B cell (primary cell): ENCODE measurements at regions of chr19 and their contacts with region 1.

Region 1: GRCh38 chr19:4791170-4792018 is at the start of gene FEM1A:
- DNase-seq: peak; percentile 100
- ATAC-seq: peak; percentile 94
- H3K4me3 ChIP-seq: peak within 1 kb of the TSS; percentile 48 to 79 (median 76)
- H3K4me3 Mint-ChIP-seq: peak within 1 kb of the TSS; percentile 84
- H3K27ac ChIP-seq: peak within 1 kb of the TSS; percentile 67 to 93
- H3K27ac Mint-ChIP-seq: peak within 1 kb of the TSS; percentile 89
- H3K4me1 ChIP-seq: peaks cover 8 to 22% of the 10 kb centered on the region in 2 donors
- H3K4me1 Mint-ChIP-seq: peaks cover 30% of the 10 kb centered on the region
- H3K27me3 ChIP-seq: no peaks in the 10 kb centered on the region
- H3K27me3 Mint-ChIP-seq: no peaks in the 10 kb centered on the region
- CTCF ChIP-seq: peak; percentile 98
- total RNA-seq, gene FEM1A: 18.2 and 18.7 TPM in 2 replicates

Region 2: GRCh38 chr19:3185482-3186376 is 1605.7 kb before region 1 on chr19 and contains the start of gene NCLN:
- CTCF ChIA-PET with region 1: no interaction called
- POLR2A ChIA-PET with region 1: no interaction called
- intact Hi-C with region 1: loop called (anchors 10 kb)
- DNase-seq: peak; percentile 98
- ATAC-seq: peak; percentile 88
- H3K4me3 ChIP-seq: peak within 1 kb of the TSS; percentile 61 to 88 (median 79)
- H3K4me3 Mint-ChIP-seq: peak within 1 kb of the TSS; percentile 93
- H3K27ac ChIP-seq: peak within 1 kb of the TSS; percentile 62 to 77
- H3K27ac Mint-ChIP-seq: peak within 1 kb of the TSS; percentile 94
- H3K4me1 ChIP-seq: peaks cover 51 to 83% of the 10 kb centered on the region in 2 donors
- H3K4me1 Mint-ChIP-seq: peaks cover 66% of the 10 kb centered on the region
- H3K27me3 ChIP-seq: no peaks in the 10 kb centered on the region
- H3K27me3 Mint-ChIP-seq: no peaks in the 10 kb centered on the region
- CTCF ChIP-seq: no peak
- total RNA-seq, gene NCLN: 53.6 and 55.0 TPM in 2 replicates

Region 3: DNA sequence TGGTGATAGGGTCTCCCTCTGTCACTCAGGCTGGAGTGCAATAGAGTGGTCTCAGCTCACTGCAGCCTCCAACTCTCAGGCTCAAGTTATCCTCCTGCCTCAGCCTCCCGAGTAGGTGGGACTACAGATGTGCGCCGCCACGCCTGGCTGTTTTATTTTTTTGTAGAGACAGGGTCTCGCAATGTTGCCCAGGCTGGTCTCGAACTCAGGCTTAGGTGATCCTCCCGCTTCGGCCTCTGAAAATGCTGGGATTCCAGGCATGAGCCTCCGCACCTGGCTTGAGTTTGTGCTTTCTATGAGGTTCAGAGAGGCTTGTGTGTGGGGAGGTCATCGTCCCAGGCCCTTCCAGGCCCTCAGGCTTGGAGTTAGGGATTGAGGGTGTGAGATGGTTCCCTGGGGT is 191.3 kb before region 1 on chr19:
- CTCF ChIA-PET with region 1: no interaction called
- POLR2A ChIA-PET with region 1: no interaction called
- intact Hi-C with region 1: no loop called
- DNase-seq: no peak
- ATAC-seq: no peak
- H3K4me3 ChIP-seq: no peak overlapping the region
- H3K4me3 Mint-ChIP-seq: no peak overlapping the region
- H3K27ac ChIP-seq: no peak overlapping the region
- H3K27ac Mint-ChIP-seq: no peak overlapping the region
- H3K4me1 ChIP-seq: peaks cover 15% of the 10 kb centered on the region in 2 donors
- H3K4me1 Mint-ChIP-seq: peaks cover 12% of the 10 kb centered on the region
- H3K27me3 ChIP-seq: peaks cover 0 to 44% (median 20%) of the 10 kb centered on the region in 4 experiments
- H3K27me3 Mint-ChIP-seq: peaks cover 26% of the 10 kb centered on the region
- CTCF ChIP-seq: no peak

Region 4: GRCh38 chr19:4638828-4639530 is 152.4 kb before region 1 on chr19 and contains the start of gene TNFAIP8L1:
- CTCF ChIA-PET with region 1: interaction called, 4 read pairs
- POLR2A ChIA-PET with region 1: no interaction called
- intact Hi-C with region 1: loop called (anchors 1 kb)
- DNase-seq: peak; percentile 97
- ATAC-seq: peak; percentile 91
- H3K4me3 ChIP-seq: peak within 1 kb of the TSS; percentile 74 to 96 (median 93)
- H3K4me3 Mint-ChIP-seq: peak within 1 kb of the TSS; percentile 99
- H3K27ac ChIP-seq: peak within 1 kb of the TSS; percentile 86 to 88
- H3K27ac Mint-ChIP-seq: peak within 1 kb of the TSS; percentile 94
- H3K4me1 ChIP-seq: peaks cover 34 to 72% of the 10 kb centered on the region in 2 donors
- H3K4me1 Mint-ChIP-seq: peaks cover 40% of the 10 kb centered on the region
- H3K27me3 ChIP-seq: peaks cover 0 to 3% (median 0%) of the 10 kb centered on the region in 4 experiments
- H3K27me3 Mint-ChIP-seq: no peaks in the 10 kb centered on the region
- CTCF ChIP-seq: no peak
- total RNA-seq, gene TNFAIP8L1: 20.9 and 21.7 TPM in 2 replicates

Region 5: DNA sequence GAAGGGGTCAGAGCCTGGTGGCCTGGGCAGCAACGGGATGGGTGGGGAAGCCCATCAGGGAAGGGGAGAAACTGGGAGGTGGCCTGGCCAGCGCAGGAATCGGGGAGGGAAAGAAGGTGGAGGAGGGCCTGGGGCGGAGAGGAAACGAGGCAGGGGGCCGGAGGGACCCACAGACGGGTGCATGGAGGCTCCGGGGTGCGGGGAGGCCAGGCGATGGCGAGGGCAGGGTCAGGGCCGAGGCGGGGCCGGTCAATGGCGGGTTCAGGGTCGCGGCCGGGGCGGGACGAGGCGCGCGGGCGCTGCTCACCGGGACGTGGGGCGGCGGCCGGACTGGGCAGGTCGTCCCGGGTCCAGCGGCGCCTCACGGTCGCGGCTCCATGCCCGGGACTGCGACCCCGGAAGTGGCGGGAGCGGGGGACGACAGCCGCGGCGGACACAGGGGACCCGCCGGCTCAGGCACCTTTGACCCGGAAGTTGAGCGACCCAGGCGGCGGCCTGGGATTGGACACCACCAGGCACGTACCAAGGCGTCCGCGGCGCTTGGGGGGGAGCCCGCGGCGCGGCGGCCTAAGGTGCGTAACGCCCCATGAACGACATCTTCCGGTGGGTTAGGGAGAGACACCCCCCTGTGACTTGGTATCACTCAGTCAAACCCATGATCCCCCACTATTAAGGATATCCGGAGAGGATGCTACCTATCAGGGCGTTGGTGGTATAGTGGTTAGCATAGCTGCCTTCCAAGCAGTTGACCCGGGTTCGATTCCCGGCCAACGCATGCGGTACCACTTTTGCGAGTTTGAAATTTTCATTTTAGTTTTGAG is 67.8 kb before region 1 on chr19 and contains the start of gene DPP9:
- CTCF ChIA-PET with region 1: interaction called, 102 read pairs
- POLR2A ChIA-PET with region 1: interaction called, 23 read pairs
- intact Hi-C with region 1: loop called (anchors 1 kb)
- DNase-seq: peak; percentile 100
- ATAC-seq: peak; percentile 94
- H3K4me3 ChIP-seq: peak within 1 kb of the TSS; percentile 71 to 97 (median 91)
- H3K4me3 Mint-ChIP-seq: peak within 1 kb of the TSS; percentile 97
- H3K27ac ChIP-seq: peak within 1 kb of the TSS; percentile 63 to 89
- H3K27ac Mint-ChIP-seq: peak within 1 kb of the TSS; percentile 98
- H3K4me1 ChIP-seq: peaks cover 20 to 26% of the 10 kb centered on the region in 2 donors
- H3K4me1 Mint-ChIP-seq: peaks cover 45% of the 10 kb centered on the region
- H3K27me3 ChIP-seq: no peaks in the 10 kb centered on the region
- H3K27me3 Mint-ChIP-seq: peaks cover 3% of the 10 kb centered on the region
- CTCF ChIP-seq: no peak
- total RNA-seq, gene DPP9: 109 and 115 TPM in 2 replicates

Region 6: GRCh38 chr19:4759388-4760284 is 31.8 kb before region 1 on chr19:
- CTCF ChIA-PET with region 1: no interaction called
- POLR2A ChIA-PET with region 1: no interaction called
- intact Hi-C with region 1: loop called (anchors 1 kb)
- DNase-seq: peak; percentile 81
- ATAC-seq: peak; percentile 93
- H3K4me3 ChIP-seq: peak overlapping the region in 4 of 5 experiments; percentile 10 to 63 (median 40)
- H3K4me3 Mint-ChIP-seq: peak overlapping the region; percentile 70
- H3K27ac ChIP-seq: no peak overlapping the region
- H3K27ac Mint-ChIP-seq: peak overlapping the region; percentile 32
- H3K4me1 ChIP-seq: peaks cover 12% of the 10 kb centered on the region in 2 donors
- H3K4me1 Mint-ChIP-seq: peaks cover 8% of the 10 kb centered on the region
- H3K27me3 ChIP-seq: peaks cover 0 to 60% (median 22%) of the 10 kb centered on the region in 4 experiments
- H3K27me3 Mint-ChIP-seq: peaks cover 41% of the 10 kb centered on the region
- CTCF ChIP-seq: no peak

Region 7: DNA sequence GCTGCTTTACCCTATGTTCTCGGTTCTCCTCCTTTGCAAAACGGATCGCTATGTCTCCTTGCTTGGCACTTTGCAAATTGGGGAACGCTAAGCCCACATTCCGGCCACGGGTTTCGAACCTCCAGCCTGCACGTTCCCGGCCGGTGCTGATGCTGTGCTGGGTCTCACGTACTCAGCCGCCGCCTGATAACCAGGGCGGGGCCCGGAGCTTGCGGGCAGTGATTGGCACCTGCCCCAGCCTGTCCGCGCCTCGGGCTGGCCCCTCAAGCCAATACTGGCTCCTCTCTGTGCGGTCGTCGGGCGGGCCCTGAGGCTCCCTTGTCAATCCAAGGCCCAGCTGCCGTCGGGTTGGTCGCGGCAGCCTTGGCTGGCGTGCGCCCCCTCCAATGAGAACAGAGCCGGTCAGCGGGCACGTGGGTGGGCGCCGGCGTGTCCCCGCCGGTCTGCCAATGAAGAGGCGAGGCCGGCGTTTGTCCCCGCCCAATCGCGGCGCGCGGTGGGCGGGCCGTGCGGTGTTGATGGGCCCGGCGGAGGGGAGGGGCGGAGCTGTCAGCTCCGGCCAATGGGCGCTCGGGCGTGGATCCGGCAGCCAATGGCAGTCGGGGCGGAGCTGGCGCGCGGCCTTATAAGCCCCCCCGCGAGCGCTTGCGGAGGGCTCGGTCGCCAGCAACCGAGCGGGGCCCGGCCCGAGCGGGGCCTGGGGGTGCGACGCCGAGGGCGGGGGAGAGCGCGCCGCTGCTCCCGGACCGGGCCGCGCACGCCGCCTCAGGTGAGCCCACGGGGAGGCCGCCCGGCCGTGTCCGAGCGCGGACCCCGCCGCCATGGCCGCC is 177.3 kb after region 1 on chr19 and contains the start of gene KDM4B:
- CTCF ChIA-PET with region 1: interaction called, 3 read pairs
- POLR2A ChIA-PET with region 1: no interaction called
- intact Hi-C with region 1: loop called (anchors 1 kb)
- DNase-seq: peak; percentile 100
- ATAC-seq: peak; percentile 89
- H3K4me3 ChIP-seq: peak within 1 kb of the TSS; percentile 41 to 67 (median 56)
- H3K4me3 Mint-ChIP-seq: peak within 1 kb of the TSS; percentile 89
- H3K27ac ChIP-seq: peak within 1 kb of the TSS; percentile 56 to 58
- H3K27ac Mint-ChIP-seq: peak within 1 kb of the TSS; percentile 92
- H3K4me1 ChIP-seq: peaks cover 27 to 34% of the 10 kb centered on the region in 2 donors
- H3K4me1 Mint-ChIP-seq: peaks cover 30% of the 10 kb centered on the region
- H3K27me3 ChIP-seq: no peaks in the 10 kb centered on the region
- H3K27me3 Mint-ChIP-seq: no peaks in the 10 kb centered on the region
- CTCF ChIP-seq: no peak
- total RNA-seq, gene KDM4B: 202 and 205 TPM in 2 replicates